Posterior vena cava (tissue), 2 donors: ENCODE measurements at regions of chr5 and their contacts with region 1.

Region 1: GRCh38 chr5:66306105-66306843 is 162.2 kb downstream of the SREK1 start:
- DNase-seq: no peak

Region 2: DNA sequence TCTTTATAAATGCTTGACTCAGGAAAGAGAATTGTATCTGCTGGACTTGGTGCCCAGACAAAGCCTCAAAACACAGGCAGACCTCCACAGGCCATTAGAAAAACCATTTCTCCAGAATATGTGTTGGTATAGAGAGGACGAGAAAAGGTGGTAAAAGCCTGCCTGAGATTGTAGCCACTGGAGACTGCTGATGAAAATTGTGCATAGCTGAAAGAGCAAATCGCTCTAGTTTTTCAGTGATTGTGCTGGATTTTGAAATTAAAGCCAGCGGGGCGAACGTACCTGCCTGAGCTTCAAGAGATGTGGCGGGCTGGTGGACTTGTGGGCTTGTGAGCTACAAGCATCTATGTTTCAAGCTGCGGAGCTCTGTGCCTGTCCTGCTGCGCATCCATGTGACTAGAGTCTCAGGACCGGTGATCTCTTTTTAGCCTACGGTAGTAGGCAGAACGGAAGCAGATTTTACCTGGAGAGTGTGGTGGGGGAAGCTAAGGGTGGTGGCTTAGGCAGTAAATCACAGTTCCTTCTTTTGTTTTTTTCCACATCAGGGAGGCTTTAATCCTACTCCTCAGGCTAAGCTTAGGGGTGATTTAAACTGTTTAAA is 31.5 kb after region 1 on chr5:
- intact Hi-C with region 1: no loop called
- DNase-seq: no peak

Region 3: DNA sequence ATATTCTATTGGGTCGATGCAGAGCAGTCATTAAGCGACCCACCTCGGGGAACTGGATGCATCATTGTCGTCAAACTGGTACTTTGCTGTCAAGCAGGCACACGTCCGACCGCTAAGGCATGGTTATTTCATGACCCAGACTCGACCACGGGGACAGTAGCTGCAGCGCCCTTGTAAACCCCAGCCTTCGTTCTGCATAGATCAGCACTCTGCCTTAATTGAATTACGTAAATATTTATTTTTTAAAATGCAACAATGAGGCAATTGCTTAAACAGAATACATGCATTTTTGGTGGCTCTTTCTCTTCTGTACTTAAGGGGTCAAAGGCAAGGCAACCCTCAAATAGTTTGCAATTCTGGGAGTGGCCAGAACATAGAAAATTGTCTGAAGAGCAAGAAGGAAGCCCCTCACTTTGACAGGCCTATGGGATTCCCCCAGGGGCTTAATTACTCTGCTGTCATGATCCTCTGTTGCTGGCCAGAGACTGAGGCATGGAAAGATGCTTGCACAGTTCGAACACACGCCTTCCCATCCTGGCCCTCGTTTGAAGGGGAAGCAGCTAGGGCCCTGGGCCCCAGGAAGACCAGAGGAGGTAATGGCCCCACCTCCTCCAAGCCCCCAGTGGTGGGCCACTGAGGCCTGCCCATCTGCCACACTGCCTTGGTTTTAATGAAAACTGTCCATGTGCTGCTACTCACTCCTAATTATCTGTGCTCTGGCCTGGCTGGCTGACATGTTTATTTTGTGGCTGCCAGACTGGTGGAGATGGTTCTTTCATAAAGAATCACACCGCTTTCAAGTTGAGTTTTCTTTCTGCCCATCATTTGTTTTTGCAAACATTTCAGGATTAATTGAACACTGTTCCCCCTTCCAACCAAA is 120.2 kb after region 1 on chr5:
- intact Hi-C with region 1: loop called in 1 of 2 experiments (anchors 10 kb)
- DNase-seq: no peak

Region 4: GRCh38 chr5:66595756-66596635 is 289.7 kb after region 1 on chr5 and contains the start of gene MAST4:
- intact Hi-C with region 1: loop called in 1 of 2 experiments (anchors 10 kb)
- DNase-seq: peak; percentile 95
- total RNA-seq, gene MAST4: 36.4 to 45.6 TPM

Region 5: DNA sequence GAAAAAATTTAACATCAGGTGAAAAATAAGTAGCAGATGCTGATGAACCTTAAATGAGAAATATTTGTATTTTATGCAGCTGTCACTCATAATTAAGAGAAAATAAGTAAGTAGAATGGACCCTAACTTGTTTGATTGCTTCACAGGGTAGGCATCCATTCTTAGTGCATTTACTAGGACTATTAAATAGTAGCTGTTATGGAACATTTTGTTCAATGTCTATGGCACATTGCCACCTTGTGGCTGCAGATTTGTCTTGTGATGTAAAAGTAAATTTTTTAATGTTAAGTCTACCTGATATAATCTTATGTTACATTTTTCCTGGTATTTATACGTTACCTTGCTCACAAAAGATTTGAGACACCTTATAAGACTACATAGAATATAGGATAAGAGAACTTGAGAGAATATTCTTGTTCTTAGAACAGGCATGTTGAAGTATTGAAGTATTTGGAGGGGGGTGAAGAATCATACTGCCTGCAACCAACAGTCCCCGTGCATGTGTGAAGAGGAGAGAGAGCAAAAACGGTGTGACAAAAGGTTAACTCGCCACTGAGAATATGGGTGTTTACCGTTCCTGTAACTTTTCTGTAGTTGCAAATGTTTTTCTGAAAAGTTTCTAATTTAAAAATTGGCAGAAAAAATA is 451.0 kb after region 1 on chr5:
- intact Hi-C with region 1: loop called (anchors 5 kb)
- DNase-seq: no peak